Endothelial cell of umbilical vein (primary cell): ENCODE measurements at regions of chr10 and their contacts with region 1.

Region 1: DNA sequence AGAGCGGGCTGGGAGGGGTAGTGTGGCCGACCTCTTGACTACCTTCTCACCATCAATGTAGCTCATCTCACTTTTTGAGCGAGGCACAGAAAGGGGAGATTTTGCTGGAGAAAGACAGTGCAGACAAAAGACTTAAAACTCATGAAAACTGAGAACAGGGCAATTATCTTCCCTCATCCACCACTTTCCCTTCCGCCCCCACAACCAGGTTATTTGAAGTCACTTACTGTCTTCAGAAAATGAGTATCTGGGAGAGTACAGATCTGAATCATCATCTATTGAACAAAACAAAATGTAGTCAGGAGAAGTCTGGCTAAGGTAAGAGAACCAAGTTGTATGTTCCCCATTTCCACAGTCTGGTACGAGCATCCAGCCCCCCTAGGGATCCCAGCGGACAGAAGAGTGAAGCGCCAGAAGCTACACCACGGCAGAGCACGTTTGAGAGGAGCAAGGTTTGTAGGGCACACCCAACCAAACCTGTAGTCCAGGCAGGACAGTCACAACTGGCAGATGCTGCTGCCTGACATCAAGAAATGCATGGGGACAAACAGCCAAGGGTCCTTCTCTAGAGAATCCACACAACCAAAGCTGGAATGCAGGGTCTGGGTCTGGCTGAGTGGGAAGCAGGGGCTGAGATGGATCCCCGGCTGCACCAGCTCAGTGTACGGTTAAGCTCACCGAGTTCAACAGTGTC is 93.4 kb upstream of the PDLIM1 start:
- DNase-seq: no peak
- H3K4me3 ChIP-seq: no peak overlapping the region
- H3K27ac ChIP-seq: no peak overlapping the region
- H3K4me1 ChIP-seq: no peaks in the 10 kb centered on the region
- H3K27me3 ChIP-seq: peaks cover 0 to 1% of the 10 kb centered on the region in 2 experiments
- CTCF ChIP-seq: no peak
- POLR2A ChIP-seq: no peak

Region 2: DNA sequence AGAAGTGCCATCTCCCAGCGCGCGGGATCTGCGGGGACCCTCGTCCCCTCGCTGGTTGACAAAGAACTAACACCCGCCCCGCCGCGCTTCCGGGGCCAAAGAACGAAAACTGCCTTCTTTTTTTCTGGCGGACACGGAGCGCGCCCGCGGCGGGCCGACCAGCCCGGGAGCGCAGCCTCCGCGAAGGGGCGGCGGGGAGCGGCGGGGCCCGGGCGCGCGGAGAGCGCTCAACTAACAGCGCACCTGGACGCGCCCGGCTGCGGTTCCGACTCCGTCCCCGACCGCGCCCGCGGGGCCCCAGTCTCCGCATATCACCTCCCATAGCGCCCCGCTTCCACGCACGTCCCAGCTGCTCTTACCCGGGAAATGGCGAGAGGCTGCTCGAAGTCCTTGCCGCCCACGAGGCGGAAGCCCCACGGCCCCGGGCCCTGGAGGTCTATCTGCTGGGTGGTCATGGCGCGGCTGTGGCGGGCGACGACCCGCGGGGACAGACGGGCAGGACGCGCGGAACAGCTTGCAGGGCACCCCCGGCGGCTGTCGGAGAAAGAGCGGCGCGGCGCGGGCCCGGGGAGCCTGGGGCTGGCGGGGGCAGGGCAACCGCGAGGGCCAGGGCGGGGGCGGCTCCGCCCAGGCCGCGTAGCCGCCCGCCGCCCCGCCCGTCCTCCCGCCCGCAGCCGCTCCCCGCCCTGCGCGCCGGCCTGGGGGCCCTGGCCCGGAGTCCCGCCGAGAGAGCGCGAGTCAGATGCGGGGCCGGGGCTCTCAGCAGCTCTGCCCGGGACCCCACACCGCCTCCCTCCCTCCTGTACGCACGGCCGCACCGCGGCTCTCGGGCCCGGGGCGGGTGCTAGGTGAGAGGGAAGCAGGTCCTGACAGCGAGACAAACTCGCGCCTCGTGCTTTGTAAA is 93.4 kb before region 1 on chr10 and contains the start of gene PDLIM1:
- CTCF ChIA-PET with region 1: no interaction called
- POLR2A ChIA-PET with region 1: no interaction called
- dilution Hi-C with region 1: no loop called
- intact Hi-C with region 1: no loop called
- DNase-seq: peak; percentile 58
- H3K4me3 ChIP-seq: peak within 1 kb of the TSS; percentile 61 to 91 (median 70)
- H3K27ac ChIP-seq: peak within 1 kb of the TSS; percentile 44
- H3K4me1 ChIP-seq: peaks cover 35% of the 10 kb centered on the region
- H3K27me3 ChIP-seq: no peaks in the 10 kb centered on the region
- CTCF ChIP-seq: peak in 1 of 2 donors; percentile 30
- POLR2A ChIP-seq: peak; percentile 57
- total RNA-seq, gene PDLIM1: 70.4 and 122 TPM in 2 replicates

Region 3: GRCh38 chr10:95394161-95394880 is 10.2 kb after region 1 on chr10:
- CTCF ChIA-PET with region 1: interaction called, 11 read pairs
- POLR2A ChIA-PET with region 1: no interaction called
- dilution Hi-C with region 1: no loop called
- intact Hi-C with region 1: no loop called
- DNase-seq: no peak
- H3K4me3 ChIP-seq: no peak overlapping the region
- H3K27ac ChIP-seq: no peak overlapping the region
- H3K4me1 ChIP-seq: peaks cover 4% of the 10 kb centered on the region
- H3K27me3 ChIP-seq: no peaks in the 10 kb centered on the region
- CTCF ChIP-seq: no peak
- POLR2A ChIP-seq: no peak

Region 4: GRCh38 chr10:96325719-96326373 is 941.7 kb after region 1 on chr10:
- CTCF ChIA-PET with region 1: no interaction called
- POLR2A ChIA-PET with region 1: no interaction called
- dilution Hi-C with region 1: no loop called
- intact Hi-C with region 1: no loop called
- DNase-seq: no peak
- H3K4me3 ChIP-seq: no peak overlapping the region
- H3K27ac ChIP-seq: no peak overlapping the region
- H3K4me1 ChIP-seq: no peaks in the 10 kb centered on the region
- H3K27me3 ChIP-seq: no peaks in the 10 kb centered on the region
- CTCF ChIP-seq: no peak
- POLR2A ChIP-seq: no peak